MCF 10A (cell line): ENCODE measurements at regions of chrX and their contacts with region 1.

Region 1: DNA sequence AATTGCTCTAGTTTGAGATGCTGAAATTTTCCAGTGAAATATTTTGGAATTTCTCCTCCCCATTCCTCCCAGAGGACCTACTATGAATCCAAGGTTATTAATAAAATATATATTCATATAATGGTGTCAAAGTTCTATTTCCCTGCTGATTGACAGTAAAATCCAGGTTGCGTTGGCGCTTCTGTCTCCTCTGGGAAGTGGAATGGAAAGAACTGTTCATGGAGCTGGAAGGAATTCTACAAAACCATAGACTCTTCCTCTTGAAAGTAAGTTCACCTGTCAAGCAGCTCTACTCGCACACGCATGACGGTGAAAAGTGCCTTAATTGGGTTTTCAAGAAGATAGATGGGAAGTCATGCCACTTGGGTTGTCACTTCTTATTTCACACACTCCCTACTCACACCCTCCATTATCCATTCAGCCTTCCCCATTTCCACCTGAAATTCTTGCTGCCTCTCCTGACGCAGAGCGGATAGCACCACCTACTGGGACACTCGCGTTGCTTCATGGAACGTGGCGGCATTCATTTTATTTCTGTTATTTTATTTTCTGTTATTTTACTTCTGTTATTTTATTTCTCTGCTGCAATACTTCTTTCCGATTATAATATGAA is 351.6 kb downstream of the NLGN4X start:
- DNase-seq: no peak
- H3K4me3 Mint-ChIP-seq: no peak overlapping the region
- H3K27ac Mint-ChIP-seq: no peak overlapping the region
- H3K4me1 Mint-ChIP-seq: no peaks in the 10 kb centered on the region
- H3K27me3 Mint-ChIP-seq: no peaks in the 10 kb centered on the region
- CTCF ChIP-seq: peak; percentile 57

Region 2: DNA sequence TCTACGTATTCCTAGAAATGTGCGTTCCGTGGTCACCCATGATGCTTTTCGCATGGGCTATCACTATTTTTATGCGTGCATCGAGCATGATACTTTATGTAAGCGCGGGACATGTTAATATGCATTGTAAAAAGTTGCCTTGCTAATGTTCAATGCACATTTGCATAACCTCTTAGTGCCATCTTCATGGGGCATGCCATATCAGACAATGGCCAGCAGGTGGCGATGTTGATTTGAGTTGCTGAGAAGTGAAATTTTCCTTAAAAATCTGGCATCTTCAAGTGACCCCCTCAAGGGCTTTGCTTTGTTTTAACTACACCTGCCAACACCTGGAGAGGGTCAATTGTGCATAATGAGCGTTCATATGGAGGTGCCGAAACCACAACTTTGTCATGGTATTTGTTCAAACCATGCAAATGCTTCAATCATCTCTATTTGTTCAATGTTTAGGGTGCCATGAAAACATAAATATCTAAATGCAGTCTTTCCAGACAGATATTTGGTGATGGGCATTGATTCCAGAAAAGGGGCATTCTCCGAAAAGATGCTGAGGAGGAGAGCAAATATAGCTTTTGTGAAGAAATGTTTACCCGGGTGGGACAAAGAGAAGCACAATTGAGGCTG is 1329.8 kb before region 1 on chrX:
- CTCF ChIA-PET with region 1: no interaction called
- POLR2A ChIA-PET with region 1: no interaction called
- intact Hi-C with region 1: loop called (anchors 5 kb)
- DNase-seq: peak; percentile 48
- H3K4me3 Mint-ChIP-seq: no peak overlapping the region
- H3K27ac Mint-ChIP-seq: no peak overlapping the region
- H3K4me1 Mint-ChIP-seq: no peaks in the 10 kb centered on the region
- H3K27me3 Mint-ChIP-seq: no peaks in the 10 kb centered on the region
- CTCF ChIP-seq: peak; percentile 91

Region 3: GRCh38 chrX:5236096-5236495 is 641.0 kb before region 1 on chrX:
- CTCF ChIA-PET with region 1: no interaction called
- POLR2A ChIA-PET with region 1: no interaction called
- intact Hi-C with region 1: loop called (anchors 10 kb)
- DNase-seq: peak; percentile 0
- H3K4me3 Mint-ChIP-seq: peak overlapping the region; percentile 49
- H3K27ac Mint-ChIP-seq: no peak overlapping the region
- H3K4me1 Mint-ChIP-seq: peaks cover 5% of the 10 kb centered on the region
- H3K27me3 Mint-ChIP-seq: no peaks in the 10 kb centered on the region
- CTCF ChIP-seq: peak; percentile 36

Region 4: DNA sequence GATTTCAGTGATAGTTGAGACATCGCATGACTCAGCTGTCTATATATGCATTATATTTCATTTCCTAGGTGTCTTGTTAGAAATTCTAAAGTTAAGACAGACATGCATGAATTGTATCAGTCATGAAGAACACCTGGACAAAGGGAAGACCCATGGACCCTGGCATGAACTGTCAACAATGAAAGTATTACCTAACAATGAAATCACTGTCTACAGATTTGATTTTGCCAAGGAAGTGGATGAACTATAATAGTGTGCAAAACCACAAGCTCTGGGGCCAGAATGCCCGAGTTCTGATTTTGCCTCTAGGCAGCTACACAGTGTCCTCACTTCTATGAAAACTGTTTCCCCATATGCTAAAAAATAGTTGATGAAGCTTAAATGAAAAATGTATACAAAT is 34.5 kb before region 1 on chrX:
- CTCF ChIA-PET with region 1: no interaction called
- POLR2A ChIA-PET with region 1: no interaction called
- intact Hi-C with region 1: no loop called
- DNase-seq: no peak
- H3K4me3 Mint-ChIP-seq: no peak overlapping the region
- H3K27ac Mint-ChIP-seq: no peak overlapping the region
- H3K4me1 Mint-ChIP-seq: peaks cover 10% of the 10 kb centered on the region
- H3K27me3 Mint-ChIP-seq: no peaks in the 10 kb centered on the region
- CTCF ChIP-seq: no peak